Natural killer cell (primary cell): ENCODE measurements at regions of chr19 and their contacts with region 1.

Region 1: GRCh38 chr19:16076154-16076957 is at the start of gene TPM4:
- DNase-seq: peak; percentile 80 to 91
- ATAC-seq: peak; percentile 52 to 69 (median 64)
- H3K4me3 ChIP-seq: peak within 1 kb of the TSS; percentile 64
- H3K4me3 Mint-ChIP-seq: peak within 1 kb of the TSS; percentile 87
- H3K27ac ChIP-seq: peak within 1 kb of the TSS; percentile 93
- H3K27ac Mint-ChIP-seq: peak within 1 kb of the TSS; percentile 92 to 94
- H3K4me1 ChIP-seq: peaks cover 46% of the 10 kb centered on the region
- H3K4me1 Mint-ChIP-seq: peaks cover 48 to 55% of the 10 kb centered on the region in 2 donors
- H3K27me3 ChIP-seq: no peaks in the 10 kb centered on the region
- H3K27me3 Mint-ChIP-seq: no peaks in the 10 kb centered on the region
- CTCF ChIP-seq: no peak
- total RNA-seq, gene TPM4: 239 to 283 (median 266) TPM

Region 2: GRCh38 chr19:16088351-16089009 is 12.1 kb after region 1 on chr19:
- intact Hi-C with region 1: loop called (anchors 1 kb)
- DNase-seq: no peak
- ATAC-seq: no peak
- H3K4me3 ChIP-seq: no peak overlapping the region
- H3K4me3 Mint-ChIP-seq: peak overlapping the region; percentile 6
- H3K27ac ChIP-seq: no peak overlapping the region
- H3K27ac Mint-ChIP-seq: peak overlapping the region in 1 of 2 donors; percentile 65
- H3K4me1 ChIP-seq: peaks cover 39% of the 10 kb centered on the region
- H3K4me1 Mint-ChIP-seq: peaks cover 29 to 57% of the 10 kb centered on the region in 2 donors
- H3K27me3 ChIP-seq: no peaks in the 10 kb centered on the region
- H3K27me3 Mint-ChIP-seq: no peaks in the 10 kb centered on the region
- CTCF ChIP-seq: no peak

Region 3: GRCh38 chr19:16111160-16111908 is 35.0 kb after region 1 on chr19 and contains the start of gene RAB8A:
- intact Hi-C with region 1: loop called (anchors 1 kb)
- DNase-seq: peak; percentile 99 to 100
- ATAC-seq: peak; percentile 86 to 94 (median 87)
- H3K4me3 ChIP-seq: peak within 1 kb of the TSS; percentile 88
- H3K4me3 Mint-ChIP-seq: peak within 1 kb of the TSS; percentile 96
- H3K27ac ChIP-seq: peak within 1 kb of the TSS; percentile 91
- H3K27ac Mint-ChIP-seq: peak within 1 kb of the TSS; percentile 92 to 97
- H3K4me1 ChIP-seq: peaks cover 45% of the 10 kb centered on the region
- H3K4me1 Mint-ChIP-seq: peaks cover 22 to 35% of the 10 kb centered on the region in 2 donors
- H3K27me3 ChIP-seq: no peaks in the 10 kb centered on the region
- H3K27me3 Mint-ChIP-seq: no peaks in the 10 kb centered on the region
- CTCF ChIP-seq: peak; percentile 95
- total RNA-seq, gene RAB8A: 137 to 161 (median 149) TPM

Region 4: GRCh38 chr19:16324384-16325160 is 248.2 kb after region 1 on chr19 and contains the start of gene KLF2:
- intact Hi-C with region 1: loop called (anchors 5 kb)
- DNase-seq: peak; percentile 97 to 98
- ATAC-seq: peak; percentile 61 to 84 (median 77)
- H3K4me3 ChIP-seq: peak within 1 kb of the TSS; percentile 99
- H3K4me3 Mint-ChIP-seq: peak within 1 kb of the TSS; percentile 81
- H3K27ac ChIP-seq: peak within 1 kb of the TSS; percentile 98
- H3K27ac Mint-ChIP-seq: peak within 1 kb of the TSS; percentile 98 to 99
- H3K4me1 ChIP-seq: peaks cover 35% of the 10 kb centered on the region
- H3K4me1 Mint-ChIP-seq: peaks cover 22 to 35% of the 10 kb centered on the region in 2 donors
- H3K27me3 ChIP-seq: no peaks in the 10 kb centered on the region
- H3K27me3 Mint-ChIP-seq: peaks cover 0 to 4% of the 10 kb centered on the region in 2 donors
- CTCF ChIP-seq: no peak
- total RNA-seq, gene KLF2: 246 to 645 (median 377) TPM

Region 5: GRCh38 chr19:16371540-16371986 is 295.2 kb after region 1 on chr19:
- intact Hi-C with region 1: loop called (anchors 2 kb)
- DNase-seq: peak; percentile 90 to 96
- ATAC-seq: peak; percentile 48 to 78 (median 73)
- H3K4me3 ChIP-seq: peak overlapping the region; percentile 13
- H3K4me3 Mint-ChIP-seq: no peak overlapping the region
- H3K27ac ChIP-seq: peak overlapping the region; percentile 94
- H3K27ac Mint-ChIP-seq: no peak overlapping the region
- H3K4me1 ChIP-seq: peaks cover 99% of the 10 kb centered on the region
- H3K4me1 Mint-ChIP-seq: peaks cover 33 to 34% of the 10 kb centered on the region in 2 donors
- H3K27me3 ChIP-seq: no peaks in the 10 kb centered on the region
- H3K27me3 Mint-ChIP-seq: no peaks in the 10 kb centered on the region
- CTCF ChIP-seq: no peak

Region 6: GRCh38 chr19:16446724-16447368 is 370.5 kb after region 1 on chr19:
- intact Hi-C with region 1: loop called (anchors 5 kb)
- DNase-seq: peak; percentile 72 to 81
- ATAC-seq: peak; percentile 78 to 85 (median 80)
- H3K4me3 ChIP-seq: no peak overlapping the region
- H3K4me3 Mint-ChIP-seq: peak overlapping the region; percentile 91
- H3K27ac ChIP-seq: peak overlapping the region; percentile 88
- H3K27ac Mint-ChIP-seq: peak overlapping the region; percentile 96 to 97
- H3K4me1 ChIP-seq: peaks cover 91% of the 10 kb centered on the region
- H3K4me1 Mint-ChIP-seq: peaks cover 76 to 81% of the 10 kb centered on the region in 2 donors
- H3K27me3 ChIP-seq: no peaks in the 10 kb centered on the region
- H3K27me3 Mint-ChIP-seq: no peaks in the 10 kb centered on the region
- CTCF ChIP-seq: no peak

Region 7: DNA sequence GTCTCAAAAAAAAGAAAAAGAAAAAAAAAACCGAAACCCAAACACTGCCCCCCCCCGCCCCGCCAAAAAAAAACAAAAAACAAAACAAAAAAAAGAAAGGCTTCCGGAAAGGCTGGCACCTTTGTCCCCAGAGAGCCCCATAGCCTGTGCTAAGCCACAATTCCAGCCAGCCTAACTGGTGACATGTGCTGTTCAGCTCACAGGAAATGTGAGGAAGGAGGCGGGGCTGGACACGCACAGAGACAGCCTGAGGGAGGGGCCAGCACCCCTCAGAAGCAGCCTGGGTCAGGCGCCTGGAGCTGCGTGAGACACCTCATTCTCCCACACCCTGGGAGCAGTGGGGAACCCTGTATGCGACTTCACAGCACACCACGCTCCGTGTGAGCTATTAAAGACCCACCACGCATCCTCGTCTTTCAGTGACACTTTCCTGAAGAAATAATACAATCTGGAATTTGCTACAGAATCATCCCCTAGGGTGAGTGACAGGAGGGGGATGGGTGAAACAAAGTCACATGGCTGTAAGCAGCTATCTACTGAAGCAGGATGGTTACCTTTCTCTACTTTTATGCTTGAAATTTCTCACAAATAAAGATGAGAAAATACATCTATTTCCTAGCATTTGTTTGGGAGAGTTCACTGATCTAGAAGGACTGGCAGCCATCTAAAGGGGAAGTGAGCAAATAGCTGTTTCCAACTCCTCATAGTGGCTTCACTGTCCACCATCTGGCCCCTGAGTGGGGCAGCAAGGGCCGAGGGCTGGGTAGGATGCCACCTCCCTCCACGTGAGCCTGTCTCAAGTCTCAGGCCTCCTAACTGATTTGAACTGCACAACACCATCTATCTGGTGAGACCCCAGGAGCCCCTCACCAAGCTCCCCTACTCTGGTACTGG is 508.1 kb after region 1 on chr19:
- intact Hi-C with region 1: loop called (anchors 10 kb)
- DNase-seq: peak; percentile 91 to 98
- ATAC-seq: peak; percentile 80 to 93 (median 82)
- H3K4me3 ChIP-seq: peak overlapping the region; percentile 44
- H3K4me3 Mint-ChIP-seq: peak overlapping the region; percentile 74
- H3K27ac ChIP-seq: peak overlapping the region; percentile 88
- H3K27ac Mint-ChIP-seq: peak overlapping the region; percentile 88 to 89
- H3K4me1 ChIP-seq: peaks cover 81% of the 10 kb centered on the region
- H3K4me1 Mint-ChIP-seq: peaks cover 54 to 86% of the 10 kb centered on the region in 2 donors
- H3K27me3 ChIP-seq: no peaks in the 10 kb centered on the region
- H3K27me3 Mint-ChIP-seq: no peaks in the 10 kb centered on the region
- CTCF ChIP-seq: no peak